MCF 10A (cell line): ENCODE measurements at regions of chr13 and their contacts with region 1.

Region 1: DNA sequence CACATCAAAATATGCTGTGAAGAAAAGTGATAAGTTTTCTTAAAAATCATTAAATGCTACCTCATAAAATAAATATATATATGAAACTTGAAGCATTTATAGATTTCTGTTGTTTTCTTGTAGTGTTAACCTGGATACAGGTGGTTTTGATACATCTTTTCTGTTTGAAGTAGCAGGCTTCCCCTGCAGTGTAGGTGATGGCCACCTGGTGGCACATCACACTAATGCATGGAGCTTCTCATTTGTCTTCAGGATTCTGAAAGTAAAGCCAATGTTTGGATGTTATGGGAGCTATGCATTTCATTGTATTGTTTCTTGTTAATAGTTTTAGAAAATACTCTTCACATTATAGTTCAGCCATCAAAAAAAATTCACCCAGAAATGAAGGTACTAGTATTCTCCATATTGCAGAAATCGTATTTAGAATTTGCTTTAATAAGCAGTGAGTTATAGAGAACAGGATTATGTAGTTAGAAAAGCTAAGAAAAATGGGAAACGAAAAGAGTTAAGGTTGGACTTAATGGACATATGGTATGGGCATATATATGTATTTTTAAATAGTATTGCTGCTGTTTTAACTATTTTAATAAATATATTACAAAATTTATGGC is 18.7 kb downstream of the GPR180 start:
- DNase-seq: peak; percentile 60
- H3K4me3 Mint-ChIP-seq: no peak overlapping the region
- H3K27ac Mint-ChIP-seq: no peak overlapping the region
- H3K4me1 Mint-ChIP-seq: no peaks in the 10 kb centered on the region
- H3K27me3 Mint-ChIP-seq: no peaks in the 10 kb centered on the region
- CTCF ChIP-seq: peak; percentile 69

Region 2: DNA sequence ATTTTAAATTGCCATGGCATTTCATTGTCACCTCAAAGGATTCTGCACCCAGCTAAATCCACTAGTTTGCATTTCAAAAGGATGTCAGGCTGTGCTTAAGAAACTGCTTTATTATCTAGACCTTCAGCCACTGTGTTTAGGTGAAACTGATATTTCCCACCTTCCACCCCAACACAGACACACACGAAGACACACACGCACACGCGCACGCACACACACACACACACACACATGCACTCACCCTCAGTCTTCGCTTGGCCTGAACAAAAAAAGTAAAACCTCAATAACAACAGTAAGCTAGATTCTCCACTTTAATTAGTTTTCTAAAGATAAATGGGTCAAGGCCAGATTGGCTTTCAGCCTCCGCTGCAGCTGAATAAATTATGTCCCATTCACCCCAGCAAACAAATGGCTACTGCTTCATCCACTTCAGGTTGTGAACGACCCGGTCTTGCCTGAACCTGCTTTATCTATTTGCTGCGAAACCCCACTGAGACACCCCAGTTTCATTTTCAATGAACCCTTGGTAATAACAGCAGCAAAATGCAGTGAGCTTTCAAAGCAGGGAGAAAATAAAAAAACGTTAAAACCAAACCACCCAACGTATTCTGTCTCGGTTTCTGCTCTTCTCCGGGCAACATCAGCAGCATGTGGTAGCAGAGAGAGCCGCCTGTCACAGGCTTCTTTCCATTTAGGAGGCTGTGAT is 307.7 kb before region 1 on chr13:
- CTCF ChIA-PET with region 1: no interaction called
- POLR2A ChIA-PET with region 1: no interaction called
- intact Hi-C with region 1: no loop called
- DNase-seq: no peak
- H3K4me3 Mint-ChIP-seq: no peak overlapping the region
- H3K27ac Mint-ChIP-seq: peak overlapping the region; percentile 51
- H3K4me1 Mint-ChIP-seq: peaks cover 12% of the 10 kb centered on the region
- H3K27me3 Mint-ChIP-seq: no peaks in the 10 kb centered on the region
- CTCF ChIP-seq: no peak

Region 3: GRCh38 chr13:94601446-94602431 is 18.7 kb before region 1 on chr13 and contains the start of gene GPR180:
- CTCF ChIA-PET with region 1: interaction called, 20 read pairs
- POLR2A ChIA-PET with region 1: interaction called, 7 read pairs
- intact Hi-C with region 1: no loop called
- DNase-seq: peak; percentile 100
- H3K4me3 Mint-ChIP-seq: peak within 1 kb of the TSS; percentile 87
- H3K27ac Mint-ChIP-seq: peak within 1 kb of the TSS; percentile 51
- H3K4me1 Mint-ChIP-seq: peaks cover 23% of the 10 kb centered on the region
- H3K27me3 Mint-ChIP-seq: no peaks in the 10 kb centered on the region
- CTCF ChIP-seq: no peak
- total RNA-seq, gene GPR180: 4.8 and 4.9 TPM in 2 replicates

Region 4: DNA sequence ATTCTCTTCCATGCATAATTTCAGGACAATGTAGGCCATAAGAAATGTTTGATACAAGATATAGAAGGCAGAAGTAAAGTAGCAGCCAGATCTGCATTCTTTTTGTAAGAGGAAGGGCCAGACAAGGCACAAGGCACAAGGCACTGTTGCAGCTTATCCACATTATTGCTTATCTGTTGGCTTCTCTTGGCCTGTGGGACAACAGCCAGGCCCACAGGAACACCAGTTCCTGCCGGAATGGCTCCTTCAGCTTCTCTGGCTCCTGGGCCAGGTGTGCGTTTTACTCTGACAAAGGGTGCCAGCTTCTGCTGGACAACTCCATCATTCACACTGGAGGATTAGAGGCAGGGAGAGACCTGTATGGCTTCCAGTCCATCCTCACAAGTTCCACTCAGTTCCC is 10.5 kb after region 1 on chr13:
- CTCF ChIA-PET with region 1: interaction called, 16 read pairs
- POLR2A ChIA-PET with region 1: no interaction called
- intact Hi-C with region 1: no loop called
- DNase-seq: no peak
- H3K4me3 Mint-ChIP-seq: no peak overlapping the region
- H3K27ac Mint-ChIP-seq: no peak overlapping the region
- H3K4me1 Mint-ChIP-seq: no peaks in the 10 kb centered on the region
- H3K27me3 Mint-ChIP-seq: no peaks in the 10 kb centered on the region
- CTCF ChIP-seq: no peak

Region 5: DNA sequence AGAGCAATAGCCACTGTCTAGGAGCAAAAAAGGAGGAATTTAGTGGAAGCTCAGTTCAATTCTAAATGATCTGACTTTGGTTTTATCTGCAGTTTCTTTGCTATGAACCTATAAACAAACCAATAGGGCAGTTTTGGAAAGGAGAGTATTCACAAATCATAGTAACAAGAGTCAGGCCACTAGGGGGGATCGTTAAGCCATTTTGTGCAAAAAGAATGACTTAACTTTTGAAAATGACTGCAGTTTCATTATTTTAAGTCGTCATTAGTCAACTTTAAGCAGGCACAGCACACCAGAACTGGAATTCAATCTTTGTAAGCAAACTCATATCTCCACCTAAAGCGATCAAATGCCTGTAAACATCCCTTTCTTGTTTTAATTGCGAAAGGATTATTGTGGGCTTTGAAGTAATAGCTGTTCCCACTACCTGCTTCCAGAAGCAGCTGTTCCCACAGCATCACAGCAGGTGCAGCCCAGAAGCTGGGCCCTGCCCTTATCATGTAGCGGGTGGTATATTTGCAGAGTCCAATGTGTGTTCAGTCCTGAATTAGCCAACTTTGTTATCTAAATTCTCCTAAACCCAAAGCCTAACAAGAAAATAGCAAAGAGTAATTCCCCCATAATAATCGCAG is 40.4 kb after region 1 on chr13:
- CTCF ChIA-PET with region 1: interaction called, 10 read pairs
- POLR2A ChIA-PET with region 1: no interaction called
- intact Hi-C with region 1: no loop called
- DNase-seq: peak; percentile 24
- H3K4me3 Mint-ChIP-seq: no peak overlapping the region
- H3K27ac Mint-ChIP-seq: no peak overlapping the region
- H3K4me1 Mint-ChIP-seq: peaks cover 15% of the 10 kb centered on the region
- H3K27me3 Mint-ChIP-seq: no peaks in the 10 kb centered on the region
- CTCF ChIP-seq: peak; percentile 15

Region 6: DNA sequence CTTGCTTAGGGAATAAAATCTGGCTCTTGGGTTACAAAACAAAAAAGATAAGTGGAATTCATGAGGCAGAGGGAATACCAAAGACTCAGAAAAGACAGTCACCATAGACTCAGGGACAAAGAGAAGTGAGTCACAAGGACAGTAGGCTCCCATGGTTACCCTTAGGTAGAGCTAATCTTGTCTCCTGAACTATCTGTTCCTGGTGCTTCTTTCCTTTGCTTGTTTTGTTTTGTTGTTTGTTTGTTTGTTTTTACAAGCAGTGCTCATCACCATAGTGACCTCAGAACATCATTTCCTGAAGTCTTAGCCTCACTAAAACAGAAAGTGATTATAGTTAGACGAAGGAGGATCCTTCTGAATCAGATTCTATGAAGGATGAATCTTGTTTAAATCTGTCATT is 234.3 kb after region 1 on chr13:
- CTCF ChIA-PET with region 1: no interaction called
- POLR2A ChIA-PET with region 1: no interaction called
- intact Hi-C with region 1: no loop called
- DNase-seq: no peak
- H3K4me3 Mint-ChIP-seq: no peak overlapping the region
- H3K27ac Mint-ChIP-seq: no peak overlapping the region
- H3K4me1 Mint-ChIP-seq: no peaks in the 10 kb centered on the region
- H3K27me3 Mint-ChIP-seq: no peaks in the 10 kb centered on the region
- CTCF ChIP-seq: no peak

Region 7: GRCh38 chr13:95138876-95139585 is 518.6 kb after region 1 on chr13:
- CTCF ChIA-PET with region 1: interaction called, 10 read pairs
- POLR2A ChIA-PET with region 1: no interaction called
- intact Hi-C with region 1: no loop called
- DNase-seq: no peak
- H3K4me3 Mint-ChIP-seq: no peak overlapping the region
- H3K27ac Mint-ChIP-seq: no peak overlapping the region
- H3K4me1 Mint-ChIP-seq: no peaks in the 10 kb centered on the region
- H3K27me3 Mint-ChIP-seq: no peaks in the 10 kb centered on the region
- CTCF ChIP-seq: no peak

Region 8: DNA sequence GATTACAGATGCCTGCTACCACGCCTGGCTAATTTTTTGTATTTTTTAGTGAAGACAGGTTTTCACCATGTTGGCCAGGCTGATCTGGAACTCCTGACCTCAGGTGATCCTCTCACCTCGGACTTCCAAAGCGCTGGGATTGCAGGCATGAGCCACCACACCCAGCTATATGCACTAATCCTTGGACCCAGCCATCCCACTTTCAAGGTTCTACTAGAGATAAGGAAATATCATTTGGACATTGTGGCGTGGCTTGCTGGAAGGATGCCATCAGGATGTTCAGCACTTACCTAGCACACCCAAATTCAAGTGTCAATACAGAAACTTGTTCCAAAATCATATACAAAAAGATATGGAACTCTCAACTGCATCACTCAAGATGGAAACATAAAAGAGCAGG is 544.4 kb after region 1 on chr13:
- CTCF ChIA-PET with region 1: interaction called, 158 read pairs
- POLR2A ChIA-PET with region 1: no interaction called
- intact Hi-C with region 1: no loop called
- DNase-seq: no peak
- H3K4me3 Mint-ChIP-seq: no peak overlapping the region
- H3K27ac Mint-ChIP-seq: no peak overlapping the region
- H3K4me1 Mint-ChIP-seq: no peaks in the 10 kb centered on the region
- H3K27me3 Mint-ChIP-seq: no peaks in the 10 kb centered on the region
- CTCF ChIP-seq: no peak